Endothelial cell of umbilical vein (primary cell): ENCODE measurements at regions of chr9 and their contacts with region 1.

Region 1: DNA sequence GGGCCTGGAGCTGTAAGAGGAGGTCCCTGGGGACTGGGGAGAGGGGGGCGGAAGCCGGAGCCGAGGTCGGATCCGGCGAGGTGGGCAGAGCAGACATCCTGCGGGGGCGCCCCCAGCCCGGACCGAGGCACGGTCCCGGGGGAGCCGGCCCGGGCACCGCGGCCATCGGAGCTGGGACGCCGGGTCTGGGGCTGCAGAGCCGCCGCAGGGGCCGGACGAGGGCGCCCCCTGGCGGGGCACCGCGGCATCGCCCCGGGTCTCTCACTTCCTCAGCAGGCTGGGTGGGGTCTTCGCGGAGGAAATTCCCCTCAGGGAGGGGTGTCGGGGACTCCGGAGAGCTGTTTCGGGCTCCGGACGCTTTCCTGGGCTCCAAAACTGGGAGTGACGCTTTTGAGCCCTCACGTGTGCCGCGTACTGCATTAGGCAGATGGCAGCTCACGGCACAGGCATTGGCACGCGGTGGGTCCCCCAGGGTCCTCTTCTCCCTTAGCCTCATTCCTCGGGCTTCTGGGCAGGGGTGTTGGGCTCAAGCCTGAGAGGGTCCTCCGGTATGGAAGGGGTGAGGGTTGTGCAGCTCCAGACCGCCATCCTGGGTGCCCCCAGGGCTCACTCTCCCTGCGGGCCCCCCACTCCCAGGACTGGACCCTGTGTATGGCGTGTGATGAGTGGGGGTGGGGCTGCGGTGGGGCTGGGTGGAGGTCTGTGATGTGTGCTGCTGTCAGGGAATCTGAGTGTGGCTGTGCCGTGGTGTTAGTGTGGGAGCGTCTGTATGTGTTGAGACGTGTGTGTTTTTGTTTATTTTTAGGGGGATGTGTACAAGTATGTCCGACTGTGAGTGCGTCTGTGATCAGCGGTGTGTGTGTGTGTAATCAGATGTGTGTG is 29.6 kb downstream of the LHX2 start:
- DNase-seq: peak; percentile 28
- H3K4me3 ChIP-seq: peak overlapping the region in 2 of 3 experiments; percentile 14 to 21
- H3K27ac ChIP-seq: no peak overlapping the region
- H3K4me1 ChIP-seq: peaks cover 8% of the 10 kb centered on the region
- H3K27me3 ChIP-seq: peaks cover 0 to 21% of the 10 kb centered on the region in 2 experiments
- CTCF ChIP-seq: peak; percentile 92 to 96
- POLR2A ChIP-seq: no peak

Region 2: DNA sequence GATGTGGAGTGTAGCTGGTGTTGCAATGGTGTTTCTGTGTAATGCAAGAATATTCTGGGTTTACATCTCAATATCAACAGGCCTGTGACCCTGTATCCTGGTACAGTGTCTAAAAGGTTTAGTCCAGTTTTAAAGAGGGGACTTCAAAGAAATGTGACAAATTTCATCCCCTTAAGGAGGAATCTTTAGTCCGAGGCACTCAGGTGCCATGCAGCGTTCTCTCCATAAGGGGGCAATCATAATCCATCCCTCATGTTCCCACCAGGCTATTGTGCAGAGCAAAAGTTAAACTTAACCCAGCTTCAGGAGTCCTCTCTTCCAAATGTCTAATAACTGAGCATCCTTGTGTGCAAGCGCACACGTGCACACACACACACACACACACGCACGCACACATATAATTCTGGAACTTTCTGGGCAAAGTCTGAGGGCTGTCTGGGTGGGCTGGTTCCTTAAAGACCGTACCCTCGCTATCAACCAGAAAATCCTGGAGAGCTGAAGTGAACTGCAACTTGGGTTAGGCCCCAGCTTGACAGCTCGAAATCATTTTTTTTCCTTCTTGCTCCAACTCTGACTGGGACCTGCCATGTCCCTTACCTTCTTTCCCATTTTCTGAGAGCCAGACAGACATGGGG is 639.2 kb before region 1 on chr9:
- CTCF ChIA-PET with region 1: interaction called, 18 read pairs
- POLR2A ChIA-PET with region 1: no interaction called
- dilution Hi-C with region 1: no loop called
- intact Hi-C with region 1: loop called (anchors 1 kb)
- DNase-seq: peak; percentile 64
- H3K4me3 ChIP-seq: no peak overlapping the region
- H3K27ac ChIP-seq: no peak overlapping the region
- H3K4me1 ChIP-seq: no peaks in the 10 kb centered on the region
- H3K27me3 ChIP-seq: no peaks in the 10 kb centered on the region
- CTCF ChIP-seq: peak; percentile 75 to 78
- POLR2A ChIP-seq: no peak

Region 3: GRCh38 chr9:123544007-123544827 is 497.0 kb before region 1 on chr9:
- CTCF ChIA-PET with region 1: interaction called, 154 read pairs
- POLR2A ChIA-PET with region 1: no interaction called
- dilution Hi-C with region 1: no loop called
- intact Hi-C with region 1: loop called (anchors 1 kb)
- DNase-seq: peak; percentile 56
- H3K4me3 ChIP-seq: no peak overlapping the region
- H3K27ac ChIP-seq: no peak overlapping the region
- H3K4me1 ChIP-seq: peaks cover 2% of the 10 kb centered on the region
- H3K27me3 ChIP-seq: no peaks in the 10 kb centered on the region
- CTCF ChIP-seq: peak; percentile 58 to 63
- POLR2A ChIP-seq: no peak

Region 4: GRCh38 chr9:123724211-123724796 is 316.9 kb before region 1 on chr9:
- CTCF ChIA-PET with region 1: interaction called, 28 read pairs
- POLR2A ChIA-PET with region 1: no interaction called
- dilution Hi-C with region 1: no loop called
- intact Hi-C with region 1: no loop called
- DNase-seq: peak; percentile 37
- H3K4me3 ChIP-seq: no peak overlapping the region
- H3K27ac ChIP-seq: no peak overlapping the region
- H3K4me1 ChIP-seq: no peaks in the 10 kb centered on the region
- H3K27me3 ChIP-seq: no peaks in the 10 kb centered on the region
- CTCF ChIP-seq: peak in 1 of 2 donors; percentile 9
- POLR2A ChIP-seq: no peak

Region 5: DNA sequence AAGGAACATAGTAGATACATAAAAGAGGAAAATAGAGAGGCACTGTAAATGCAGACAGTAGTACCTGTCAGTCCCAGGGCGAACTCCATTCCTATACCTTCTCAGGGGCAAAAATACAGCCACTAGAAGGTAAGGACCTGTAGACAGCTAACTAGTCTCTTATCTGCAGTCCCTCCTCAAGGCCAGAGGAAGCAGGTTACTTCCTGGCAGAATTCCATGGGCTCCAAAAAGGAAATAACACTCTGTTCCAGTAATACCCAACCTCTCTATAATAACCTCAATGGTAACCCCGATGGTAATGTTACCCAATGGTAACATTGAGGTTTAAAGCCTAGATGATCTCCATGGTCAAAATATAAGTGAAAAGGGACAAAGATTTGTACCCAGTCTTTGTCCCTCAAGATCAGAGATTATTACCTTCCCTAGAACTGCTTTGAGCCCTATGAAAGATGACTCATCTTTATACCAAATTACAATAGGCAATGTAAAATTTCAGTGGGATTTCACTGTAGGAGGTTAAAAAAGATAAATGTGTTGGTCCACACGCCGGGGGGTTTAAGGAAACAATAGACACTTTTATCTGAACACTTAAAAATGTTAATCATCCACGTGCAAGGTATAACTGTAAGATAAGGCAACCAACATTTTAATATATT is 224.2 kb before region 1 on chr9:
- CTCF ChIA-PET with region 1: no interaction called
- POLR2A ChIA-PET with region 1: no interaction called
- dilution Hi-C with region 1: no loop called
- intact Hi-C with region 1: no loop called
- DNase-seq: peak; percentile 89
- H3K4me3 ChIP-seq: no peak overlapping the region
- H3K27ac ChIP-seq: peak overlapping the region; percentile 29
- H3K4me1 ChIP-seq: peaks cover 36% of the 10 kb centered on the region
- H3K27me3 ChIP-seq: no peaks in the 10 kb centered on the region
- CTCF ChIP-seq: no peak
- POLR2A ChIP-seq: no peak

Region 6: DNA sequence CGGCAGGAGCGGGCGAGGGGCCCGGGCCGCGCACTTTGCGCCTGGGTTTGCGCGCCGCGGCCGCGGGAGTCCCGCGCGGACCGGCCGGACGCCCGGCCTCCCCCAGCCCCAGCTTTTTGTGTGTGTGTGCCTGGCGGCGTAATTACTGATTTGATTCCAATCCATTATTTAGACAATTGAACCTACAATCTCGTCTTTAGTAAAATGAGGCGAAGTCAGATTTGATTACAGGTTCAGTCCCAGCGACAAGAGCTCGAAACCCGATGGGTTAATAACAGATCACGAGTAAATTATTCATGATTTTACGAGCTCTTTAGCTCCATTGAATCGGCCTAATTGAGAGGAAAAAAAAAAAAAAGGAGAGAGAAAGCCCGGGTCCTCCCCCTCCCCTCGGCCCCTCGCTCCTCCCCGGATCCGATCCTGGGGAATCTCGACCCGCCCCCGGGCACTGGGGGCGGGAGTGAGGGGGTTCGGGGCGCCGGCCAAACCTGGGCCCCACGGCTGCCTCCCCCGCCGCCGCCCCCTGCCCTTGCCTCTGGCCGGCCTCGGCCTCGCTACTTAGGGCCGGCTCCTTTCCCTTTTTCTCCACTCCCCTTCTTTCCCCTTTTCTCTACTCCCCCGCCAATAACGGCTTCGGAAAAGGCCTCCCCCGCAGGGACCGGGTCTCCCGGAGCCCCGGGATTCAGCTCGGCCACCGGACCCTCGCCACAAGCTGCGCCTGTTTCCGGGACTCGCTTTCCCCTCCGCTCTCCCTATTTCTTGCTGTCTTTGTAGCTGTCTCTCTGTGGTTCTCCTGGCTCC is 23.0 kb before region 1 on chr9:
- CTCF ChIA-PET with region 1: interaction called, 12 read pairs
- POLR2A ChIA-PET with region 1: no interaction called
- dilution Hi-C with region 1: no loop called
- intact Hi-C with region 1: no loop called
- DNase-seq: no peak
- H3K4me3 ChIP-seq: no peak overlapping the region
- H3K27ac ChIP-seq: no peak overlapping the region
- H3K4me1 ChIP-seq: no peaks in the 10 kb centered on the region
- H3K27me3 ChIP-seq: peaks cover 93 to 100% of the 10 kb centered on the region in 2 experiments
- CTCF ChIP-seq: no peak
- POLR2A ChIP-seq: no peak

Region 7: DNA sequence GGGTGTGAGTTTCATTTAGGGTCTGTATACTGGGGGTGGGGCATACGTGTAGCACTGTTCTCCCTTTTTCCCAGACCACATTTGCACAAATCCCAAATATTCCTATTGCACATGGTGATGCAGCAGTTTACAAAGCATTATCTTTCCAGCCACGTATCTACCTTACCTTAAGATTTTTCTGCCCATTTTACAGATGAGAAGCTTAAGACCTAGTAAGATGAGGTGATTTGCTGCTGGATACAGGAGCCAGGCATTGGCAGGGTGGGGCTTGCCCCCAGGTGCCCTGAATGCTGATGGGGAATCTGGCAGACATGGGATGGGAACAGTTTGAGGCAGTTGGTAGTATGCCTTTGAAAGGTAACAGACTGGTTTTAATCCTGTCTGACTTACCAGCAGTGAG is 17.1 kb before region 1 on chr9:
- CTCF ChIA-PET with region 1: interaction called, 12 read pairs
- POLR2A ChIA-PET with region 1: no interaction called
- dilution Hi-C with region 1: no loop called
- intact Hi-C with region 1: no loop called
- DNase-seq: no peak
- H3K4me3 ChIP-seq: no peak overlapping the region
- H3K27ac ChIP-seq: no peak overlapping the region
- H3K4me1 ChIP-seq: no peaks in the 10 kb centered on the region
- H3K27me3 ChIP-seq: peaks cover 55 to 60% of the 10 kb centered on the region in 2 experiments
- CTCF ChIP-seq: no peak
- POLR2A ChIP-seq: no peak

Region 8: GRCh38 chr9:124054582-124055227 is 13.5 kb after region 1 on chr9:
- CTCF ChIA-PET with region 1: interaction called, 19 read pairs
- POLR2A ChIA-PET with region 1: no interaction called
- dilution Hi-C with region 1: no loop called
- intact Hi-C with region 1: no loop called
- DNase-seq: no peak
- H3K4me3 ChIP-seq: no peak overlapping the region
- H3K27ac ChIP-seq: no peak overlapping the region
- H3K4me1 ChIP-seq: no peaks in the 10 kb centered on the region
- H3K27me3 ChIP-seq: peaks cover 2 to 6% of the 10 kb centered on the region in 2 experiments
- CTCF ChIP-seq: no peak
- POLR2A ChIP-seq: no peak